ENCODE measurements at regions of chr16 and their contacts with region 1.

Region 1: DNA sequence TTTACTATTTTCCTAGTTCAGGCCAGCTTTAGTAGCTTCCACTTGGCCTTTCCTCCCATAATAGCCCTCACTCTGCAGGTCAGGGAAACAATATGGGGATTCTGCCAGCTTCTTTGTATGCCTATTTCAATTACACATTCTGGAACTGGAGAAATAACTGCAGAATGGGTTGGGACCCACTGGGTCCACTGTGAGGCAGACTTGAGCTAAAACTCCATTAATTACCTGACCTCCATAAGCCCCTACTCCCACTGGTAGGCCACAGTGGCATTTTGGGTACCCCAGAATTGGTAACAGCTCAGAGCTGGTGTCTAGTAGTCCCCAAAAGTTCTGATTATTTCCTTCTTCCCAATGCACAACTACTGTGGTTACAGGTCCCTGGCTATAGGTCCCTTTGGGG is 16.7 kb upstream of the TENT4B start:
- DNase-seq: no peak
- ATAC-seq: no peak

Region 2: DNA sequence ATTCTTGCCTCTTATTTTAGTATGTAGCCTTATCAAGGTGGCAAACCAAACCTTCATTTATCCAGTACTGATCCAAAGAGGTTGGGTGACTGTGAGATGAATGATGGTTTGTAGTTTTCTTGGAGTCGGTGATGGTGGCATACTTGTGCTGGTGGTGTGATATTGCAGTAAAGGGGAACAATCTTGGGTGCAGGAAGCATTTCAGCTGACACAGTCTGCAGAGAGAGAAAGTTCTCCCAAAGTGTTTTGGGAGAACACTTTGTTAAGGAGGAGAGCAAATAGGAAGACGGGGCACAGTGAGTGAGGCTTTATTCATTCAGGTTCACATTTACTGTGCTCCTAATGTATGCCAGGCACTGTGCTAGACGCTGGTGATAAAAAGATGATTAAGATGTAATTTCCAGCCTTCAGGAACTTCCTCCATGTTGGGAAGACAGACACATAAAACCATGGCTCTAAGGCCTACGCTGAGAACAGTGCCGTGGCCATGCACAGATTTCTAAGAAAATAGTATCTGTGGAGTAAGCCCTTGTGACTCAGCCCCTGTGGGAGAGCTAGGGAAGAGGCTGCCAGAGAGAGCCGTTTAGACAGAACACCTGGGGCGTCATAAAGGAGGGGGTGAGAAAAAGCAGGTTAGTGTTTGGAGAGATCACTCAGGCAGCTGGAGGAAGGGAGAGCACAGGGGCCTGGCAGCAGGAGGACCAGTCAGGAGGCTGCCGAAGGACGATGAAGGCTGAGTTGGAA is 56.8 kb before region 1 on chr16:
- intact Hi-C with region 1: loop called in 1 of 2 experiments (anchors 10 kb)
- DNase-seq: no peak
- ATAC-seq: no peak